HEK293 (cell line): ENCODE measurements at regions of chr2 and their contacts with region 1.

Region 1: DNA sequence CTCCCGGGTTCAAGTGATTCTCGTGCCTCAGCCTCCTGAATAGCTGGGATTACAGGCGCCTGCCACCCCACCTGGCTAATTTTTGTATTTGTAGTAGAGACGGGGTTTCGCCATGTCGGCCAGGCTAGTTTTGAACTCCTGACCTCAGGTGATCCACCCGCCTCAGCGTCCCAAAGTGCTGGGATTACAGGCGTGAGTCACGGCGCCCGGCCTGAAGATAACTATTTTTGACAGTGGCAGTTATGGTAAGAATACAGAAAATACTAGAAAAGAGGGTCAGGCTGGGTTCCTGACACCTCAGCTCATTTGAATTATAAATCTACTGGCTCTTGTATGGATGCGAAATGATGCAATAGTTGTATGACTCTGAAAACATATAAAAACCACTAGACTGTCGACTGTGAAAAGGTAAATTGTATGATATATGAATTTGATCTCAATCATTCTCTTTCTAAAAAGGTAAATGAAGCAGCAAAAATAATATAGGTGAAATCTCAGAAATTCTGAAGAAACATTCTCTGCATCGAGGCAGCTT is 11.1 kb upstream of the DGKD start:
- H3K4me3 ChIP-seq: no peak overlapping the region
- H3K27ac ChIP-seq: no peak overlapping the region
- H3K4me1 ChIP-seq: no peaks in the 10 kb centered on the region
- CTCF ChIP-seq: no peak

Region 2: GRCh38 chr2:232979871-232980461 is 363.3 kb before region 1 on chr2:
- CTCF ChIA-PET with region 1: no interaction called
- POLR2A ChIA-PET with region 1: no interaction called
- H3K4me3 ChIP-seq: no peak overlapping the region
- H3K27ac ChIP-seq: no peak overlapping the region
- H3K4me1 ChIP-seq: no peaks in the 10 kb centered on the region
- CTCF ChIP-seq: no peak

Region 3: GRCh38 chr2:233353769-233354499 is 10.7 kb after region 1 on chr2 and contains the start of gene DGKD:
- CTCF ChIA-PET with region 1: interaction called, 10 read pairs
- POLR2A ChIA-PET with region 1: no interaction called
- H3K4me3 ChIP-seq: peak within 1 kb of the TSS; percentile 80
- H3K27ac ChIP-seq: peak within 1 kb of the TSS; percentile 69
- H3K4me1 ChIP-seq: peaks cover 13% of the 10 kb centered on the region; the same call in 1 of the 2 replicates
- CTCF ChIP-seq: no peak